Activated CD4-positive, alpha-beta memory T cell treated with anti-CD3 and anti-CD28 coated beads for 36 hours (primary cell): ENCODE measurements at regions of chr3 and their contacts with region 1.

Region 1: DNA sequence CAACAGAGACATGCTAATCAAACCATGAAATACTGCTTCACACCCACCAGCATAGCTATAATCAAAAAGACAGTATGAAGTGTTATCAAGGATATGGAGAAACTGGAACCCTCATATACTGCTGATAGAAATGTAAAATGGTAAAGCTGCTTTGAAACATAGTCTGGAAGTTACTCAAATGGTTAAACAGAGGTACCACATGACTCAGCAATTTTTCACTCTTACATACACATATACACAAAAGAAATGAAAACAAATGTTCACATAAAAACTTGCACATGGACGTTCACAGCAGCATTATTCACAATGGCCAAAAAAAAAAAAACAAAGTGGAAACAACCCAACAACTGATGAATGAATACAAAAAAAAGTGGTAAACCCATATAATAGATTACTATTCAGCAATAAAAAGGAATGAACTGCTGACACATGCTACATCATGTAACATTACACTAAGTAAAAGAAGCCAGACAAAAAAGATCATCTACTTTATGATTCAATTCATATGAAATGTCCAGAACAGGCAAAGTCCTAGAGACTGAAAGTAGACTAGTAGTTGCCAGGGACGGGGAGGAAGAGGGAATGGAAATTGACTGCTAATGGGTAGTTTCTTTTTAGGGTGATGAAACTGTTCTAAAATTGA is 23.2 kb downstream of the ZNF148 start:
- DNase-seq: no peak
- H3K4me3 Mint-ChIP-seq: no peak overlapping the region
- H3K27ac Mint-ChIP-seq: peak overlapping the region; percentile 72
- H3K4me1 Mint-ChIP-seq: peaks cover 65% of the 10 kb centered on the region
- H3K27me3 Mint-ChIP-seq: no peaks in the 10 kb centered on the region

Region 2: DNA sequence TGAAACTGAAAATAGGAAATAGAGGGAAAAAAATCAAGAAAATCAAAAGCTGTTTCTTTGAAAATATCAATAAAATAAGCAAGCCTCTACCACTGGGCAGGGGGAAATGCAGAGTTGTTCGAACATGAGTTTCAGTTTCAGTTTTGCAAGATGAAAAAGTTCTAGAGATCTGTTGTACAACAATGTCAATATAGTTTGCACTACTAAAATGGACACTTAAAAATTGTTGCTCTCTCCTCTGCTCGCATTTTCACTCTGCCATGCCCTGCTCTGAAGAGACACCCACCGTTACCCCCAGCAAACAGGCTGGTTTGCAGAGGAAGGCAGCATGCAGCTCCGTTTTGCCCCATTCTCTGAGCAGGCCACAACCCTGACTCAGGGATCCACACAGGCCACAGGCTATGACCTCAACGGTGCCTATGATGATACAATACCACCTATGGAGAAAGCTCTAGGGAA is 41.3 kb before region 1 on chr3:
- CTCF ChIA-PET with region 1: no interaction called
- POLR2A ChIA-PET with region 1: interaction called, 3 read pairs
- intact Hi-C with region 1: loop called (anchors 5 kb)
- DNase-seq: peak; percentile 72
- H3K4me3 Mint-ChIP-seq: peak overlapping the region; percentile 84
- H3K27ac Mint-ChIP-seq: peak overlapping the region; percentile 81
- H3K4me1 Mint-ChIP-seq: peaks cover 45% of the 10 kb centered on the region
- H3K27me3 Mint-ChIP-seq: no peaks in the 10 kb centered on the region

Region 3: GRCh38 chr3:125337506-125337905 is 14.4 kb before region 1 on chr3:
- CTCF ChIA-PET with region 1: no interaction called
- POLR2A ChIA-PET with region 1: interaction called, 4 read pairs
- intact Hi-C with region 1: loop called (anchors 2 kb)
- DNase-seq: no peak
- H3K4me3 Mint-ChIP-seq: no peak overlapping the region
- H3K27ac Mint-ChIP-seq: peak overlapping the region; percentile 1
- H3K4me1 Mint-ChIP-seq: peaks cover 49% of the 10 kb centered on the region
- H3K27me3 Mint-ChIP-seq: no peaks in the 10 kb centered on the region

Region 4: DNA sequence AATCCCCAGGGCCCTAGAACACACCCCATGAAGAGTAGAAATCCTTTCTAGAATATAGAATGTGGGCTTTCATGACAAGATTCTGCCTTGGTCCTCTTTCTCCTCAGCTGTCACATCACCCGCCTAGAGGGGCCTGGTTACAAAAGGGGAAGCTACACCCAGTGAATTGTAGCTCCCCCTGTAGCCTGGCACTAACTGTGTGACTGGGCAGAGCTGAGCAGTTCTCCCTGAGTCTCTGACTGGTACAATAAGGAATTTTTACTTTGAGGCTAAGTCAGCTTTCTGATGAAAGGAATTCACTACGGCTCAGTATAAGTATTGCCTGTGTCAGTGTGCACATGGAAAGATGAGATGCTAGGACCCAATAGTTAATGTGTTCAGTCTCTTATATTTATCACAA is 51.9 kb after region 1 on chr3:
- CTCF ChIA-PET with region 1: no interaction called
- POLR2A ChIA-PET with region 1: no interaction called
- intact Hi-C with region 1: no loop called
- DNase-seq: no peak
- H3K4me3 Mint-ChIP-seq: no peak overlapping the region
- H3K27ac Mint-ChIP-seq: no peak overlapping the region
- H3K4me1 Mint-ChIP-seq: no peaks in the 10 kb centered on the region
- H3K27me3 Mint-ChIP-seq: peaks cover 3% of the 10 kb centered on the region